Natural killer cell (primary cell): ENCODE measurements at regions of chr7 and their contacts with region 1.

Region 1: GRCh38 chr7:131327626-131328376 is at the start of gene MKLN1:
- DNase-seq: peak; percentile 86 to 95
- ATAC-seq: peak; percentile 97 to 99 (median 98)
- H3K4me3 ChIP-seq: peak within 1 kb of the TSS; percentile 94
- H3K4me3 Mint-ChIP-seq: peak within 1 kb of the TSS; percentile 99
- H3K27ac ChIP-seq: peak within 1 kb of the TSS; percentile 91
- H3K27ac Mint-ChIP-seq: peak within 1 kb of the TSS; percentile 95 to 100
- H3K4me1 ChIP-seq: peaks cover 8% of the 10 kb centered on the region
- H3K4me1 Mint-ChIP-seq: peaks cover 42 to 50% of the 10 kb centered on the region in 2 donors
- H3K27me3 ChIP-seq: no peaks in the 10 kb centered on the region
- H3K27me3 Mint-ChIP-seq: peaks cover 0 to 3% of the 10 kb centered on the region in 2 donors
- CTCF ChIP-seq: no peak
- total RNA-seq, gene MKLN1: 59.1 to 79.6 (median 65.0) TPM

Region 2: DNA sequence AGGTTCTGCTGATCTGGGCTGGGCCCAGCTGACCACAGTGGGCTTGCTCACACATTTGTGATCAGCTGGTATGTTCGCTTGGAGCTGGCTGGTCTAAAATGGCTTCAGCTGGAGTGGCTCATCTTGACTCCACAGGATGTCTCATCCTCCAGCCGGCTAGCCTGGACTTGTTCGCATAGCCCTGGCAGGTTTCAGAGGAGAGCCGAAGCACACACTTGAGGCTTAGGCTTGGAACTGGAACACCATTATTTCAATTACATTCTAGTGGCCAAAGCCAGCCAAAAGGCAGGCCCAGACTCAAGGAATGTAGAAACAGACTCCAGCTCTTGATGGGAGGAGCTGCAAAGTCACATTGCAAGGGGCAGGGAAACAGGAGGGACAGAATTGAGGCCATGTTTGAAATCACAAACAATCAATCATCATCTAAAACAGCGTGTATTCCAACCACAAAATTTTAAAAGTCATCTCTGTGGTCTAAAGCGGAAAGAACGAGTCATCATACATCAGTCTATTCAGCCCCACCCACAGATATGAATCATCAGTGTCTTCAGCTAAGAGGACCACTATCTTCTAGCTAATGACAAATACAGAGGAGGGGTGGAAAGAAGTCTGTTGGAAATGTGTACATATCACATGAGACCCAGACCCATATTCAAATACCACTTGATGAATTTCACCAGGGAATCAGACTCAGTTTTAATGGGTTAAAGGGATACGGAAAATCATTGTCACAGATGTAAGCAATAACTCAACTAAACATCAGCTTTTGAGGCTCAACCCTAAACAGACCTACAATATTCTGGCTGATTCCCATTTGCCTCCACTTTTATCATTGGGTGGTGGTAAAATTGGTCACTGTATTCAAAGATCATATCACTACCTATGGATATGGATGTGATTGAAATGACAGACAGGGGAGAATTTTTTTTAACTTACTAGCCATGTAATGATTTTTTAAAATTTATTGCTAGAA is 139.1 kb before region 1 on chr7:
- intact Hi-C with region 1: loop called (anchors 2 kb)
- DNase-seq: peak; percentile 37 to 88
- ATAC-seq: peak; percentile 88 to 97 (median 96)
- H3K4me3 ChIP-seq: no peak overlapping the region
- H3K4me3 Mint-ChIP-seq: peak overlapping the region; percentile 57
- H3K27ac ChIP-seq: peak overlapping the region; percentile 67
- H3K27ac Mint-ChIP-seq: peak overlapping the region; percentile 87 to 96
- H3K4me1 ChIP-seq: peaks cover 12% of the 10 kb centered on the region
- H3K4me1 Mint-ChIP-seq: peaks cover 27 to 28% of the 10 kb centered on the region in 2 donors
- H3K27me3 ChIP-seq: no peaks in the 10 kb centered on the region
- H3K27me3 Mint-ChIP-seq: no peaks in the 10 kb centered on the region
- CTCF ChIP-seq: no peak

Region 3: DNA sequence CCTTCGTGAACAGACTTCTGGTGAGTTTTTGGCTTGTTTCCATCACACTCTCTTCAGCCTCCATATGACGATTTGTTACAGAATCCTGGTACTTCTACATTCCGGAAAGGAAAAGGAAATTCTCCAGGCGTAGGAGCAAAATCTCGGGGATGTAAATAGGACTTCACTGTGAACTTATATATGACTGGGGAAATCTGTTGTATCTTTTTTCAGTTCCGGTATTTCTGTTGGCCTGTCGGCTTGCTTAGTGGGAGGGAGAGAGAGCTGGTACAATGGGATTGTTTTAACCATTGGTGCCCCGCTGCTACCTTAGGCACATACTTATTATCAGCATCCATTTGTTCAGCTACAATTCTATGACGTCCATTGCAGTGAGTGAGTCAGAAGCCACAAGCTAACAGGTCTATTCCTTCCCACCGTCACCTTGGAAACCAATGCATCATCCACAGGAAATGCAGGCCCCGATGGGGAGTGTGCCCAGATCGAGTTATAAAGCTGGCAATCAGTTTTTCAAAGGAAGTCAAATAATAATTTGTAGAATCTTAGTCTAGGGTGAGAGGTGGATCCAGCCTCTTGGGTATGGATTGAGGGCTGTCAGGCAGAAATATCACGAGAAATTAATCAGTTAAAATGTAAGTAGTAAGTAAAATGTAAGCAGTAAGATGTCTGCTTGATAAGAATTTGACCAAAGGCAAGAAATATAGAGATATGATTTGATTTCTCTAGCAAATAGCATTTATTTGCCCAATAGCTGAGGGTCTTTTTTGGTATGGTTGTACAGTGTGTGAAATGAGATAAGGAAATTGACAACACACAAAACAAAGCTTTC is 92.1 kb before region 1 on chr7:
- intact Hi-C with region 1: loop called (anchors 5 kb)
- DNase-seq: peak; percentile 64 to 90
- ATAC-seq: peak; percentile 63 to 81 (median 77)
- H3K4me3 ChIP-seq: no peak overlapping the region
- H3K4me3 Mint-ChIP-seq: peak overlapping the region; percentile 65
- H3K27ac ChIP-seq: peak overlapping the region; percentile 59
- H3K27ac Mint-ChIP-seq: peak overlapping the region; percentile 91 to 97
- H3K4me1 ChIP-seq: peaks cover 26% of the 10 kb centered on the region
- H3K4me1 Mint-ChIP-seq: peaks cover 53 to 57% of the 10 kb centered on the region in 2 donors
- H3K27me3 ChIP-seq: no peaks in the 10 kb centered on the region
- H3K27me3 Mint-ChIP-seq: no peaks in the 10 kb centered on the region
- CTCF ChIP-seq: no peak

Region 4: GRCh38 chr7:131338173-131338572 is 10.4 kb after region 1 on chr7:
- intact Hi-C with region 1: no loop called
- DNase-seq: peak in 1 of 2 donors; percentile 17
- ATAC-seq: peak in 1 of 3 donors; percentile 42
- H3K4me3 ChIP-seq: no peak overlapping the region
- H3K4me3 Mint-ChIP-seq: no peak overlapping the region
- H3K27ac ChIP-seq: no peak overlapping the region
- H3K27ac Mint-ChIP-seq: no peak overlapping the region
- H3K4me1 ChIP-seq: no peaks in the 10 kb centered on the region
- H3K4me1 Mint-ChIP-seq: peaks cover 69% of the 10 kb centered on the region in 2 donors
- H3K27me3 ChIP-seq: no peaks in the 10 kb centered on the region
- H3K27me3 Mint-ChIP-seq: no peaks in the 10 kb centered on the region
- CTCF ChIP-seq: no peak

Region 5: DNA sequence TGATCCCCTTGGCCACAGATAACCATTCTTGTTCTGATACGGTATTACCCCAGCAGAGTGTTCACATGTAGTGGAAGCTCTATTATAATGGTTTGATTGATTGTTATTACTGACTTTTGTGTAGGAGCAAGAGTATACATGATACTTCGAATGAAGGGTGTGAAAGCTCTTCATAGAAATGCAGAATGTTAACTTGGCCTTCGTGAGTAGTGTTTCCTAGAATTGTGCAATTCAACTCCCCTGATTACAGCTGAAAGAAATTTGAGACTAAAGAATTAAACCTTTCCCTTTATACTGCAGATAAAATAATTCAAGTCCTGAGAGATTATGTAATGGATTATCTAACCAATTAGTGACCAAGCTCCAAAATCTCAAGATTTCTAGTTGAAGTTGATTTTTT is 38.0 kb after region 1 on chr7:
- intact Hi-C with region 1: loop called (anchors 5 kb)
- DNase-seq: no peak
- ATAC-seq: no peak
- H3K4me3 ChIP-seq: no peak overlapping the region
- H3K4me3 Mint-ChIP-seq: no peak overlapping the region
- H3K27ac ChIP-seq: no peak overlapping the region
- H3K27ac Mint-ChIP-seq: peak overlapping the region in 1 of 2 donors; percentile 18
- H3K4me1 ChIP-seq: peaks cover 9% of the 10 kb centered on the region
- H3K4me1 Mint-ChIP-seq: peaks cover 67 to 75% of the 10 kb centered on the region in 2 donors
- H3K27me3 ChIP-seq: no peaks in the 10 kb centered on the region
- H3K27me3 Mint-ChIP-seq: no peaks in the 10 kb centered on the region
- CTCF ChIP-seq: no peak